Activated CD4-positive, alpha-beta T cell treated with anti-CD3 and anti-CD28 coated beads for 36 hours (primary cell): ENCODE measurements at regions of chr1 and their contacts with region 1.

Region 1: DNA sequence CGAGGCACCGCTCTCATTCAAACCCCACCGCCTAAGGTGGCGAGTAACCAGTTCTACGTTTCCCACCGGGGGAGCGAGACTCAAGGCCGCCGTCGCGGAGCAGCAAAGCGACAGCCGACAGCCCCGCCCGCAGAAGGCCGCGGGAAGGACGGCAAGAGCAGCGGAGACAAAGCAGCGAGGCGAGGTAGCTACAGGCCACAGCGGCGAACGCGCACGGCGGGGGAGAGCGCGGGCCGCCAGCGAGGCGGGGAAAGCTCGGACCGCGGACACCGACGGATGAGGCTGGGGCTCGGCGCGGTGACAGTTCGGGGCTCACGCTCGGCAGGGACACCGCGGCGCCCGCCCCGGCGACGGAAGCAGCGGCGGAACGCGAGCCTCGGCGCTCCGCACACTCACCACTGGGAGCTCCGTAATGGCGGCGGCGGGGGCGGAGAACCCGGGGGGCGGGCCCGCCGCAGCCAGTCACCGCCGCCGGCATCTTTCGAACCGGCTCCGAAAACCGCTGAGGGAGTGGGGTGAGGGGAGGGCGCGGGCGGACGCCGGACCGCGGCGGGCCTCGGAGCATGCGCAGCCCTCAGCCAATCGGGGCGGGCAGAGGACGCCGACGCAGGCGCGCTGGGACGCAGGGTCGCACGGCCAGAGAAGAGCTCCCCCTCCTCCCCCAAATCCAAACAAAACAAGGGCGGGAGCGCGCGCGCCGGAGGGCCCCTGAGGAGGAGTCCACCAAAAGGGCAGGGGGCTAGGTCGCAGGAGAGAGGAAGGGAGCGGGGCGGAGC is 666 bp downstream of the HP1BP3 start:
- DNase-seq: peak; percentile 98
- ATAC-seq: peak; percentile 88
- H3K4me3 Mint-ChIP-seq: peak overlapping the region; percentile 96
- H3K27ac Mint-ChIP-seq: peak overlapping the region; percentile 96
- H3K4me1 Mint-ChIP-seq: peaks cover 29% of the 10 kb centered on the region
- H3K27me3 Mint-ChIP-seq: no peaks in the 10 kb centered on the region

Region 2: DNA sequence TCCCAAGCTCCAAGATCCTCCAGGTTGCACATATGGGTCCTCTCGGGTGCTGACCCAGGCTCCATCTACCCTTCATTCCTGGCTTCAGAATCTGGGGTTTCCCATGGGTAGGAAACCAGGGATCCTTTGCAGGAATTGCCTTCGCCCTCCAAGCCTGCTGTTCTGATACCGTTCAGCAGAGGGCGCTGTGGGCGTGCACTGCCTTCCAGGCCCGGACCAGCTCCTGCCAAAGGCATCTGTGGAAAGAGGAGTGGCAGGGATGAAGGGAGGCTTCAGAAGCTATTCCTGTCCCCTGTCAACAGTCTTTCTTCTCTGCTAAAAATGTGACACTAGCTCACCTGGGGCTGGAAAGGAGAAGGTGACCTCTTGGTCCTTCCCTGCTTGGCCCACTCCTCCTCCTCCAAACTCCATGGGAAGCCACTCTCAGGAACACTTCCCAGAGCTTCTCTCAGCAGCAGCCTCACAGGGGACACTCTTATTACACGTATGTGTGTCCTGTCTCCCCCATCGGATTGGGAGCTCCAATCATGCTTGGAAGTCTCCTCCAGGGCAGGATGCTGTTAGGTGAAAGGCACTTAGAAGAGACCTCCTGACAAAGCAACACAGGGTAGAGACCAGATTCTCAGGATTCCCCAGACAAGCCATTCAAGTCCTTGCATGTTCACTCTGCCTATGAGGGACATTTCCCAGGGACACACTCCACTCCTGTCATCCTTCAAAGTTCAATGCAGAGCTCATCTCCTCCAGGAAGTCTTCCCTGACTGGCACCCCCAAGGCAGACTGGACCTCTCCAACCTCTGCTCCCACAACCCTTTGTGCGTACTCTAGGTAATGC is 424.4 kb before region 1 on chr1:
- CTCF ChIA-PET with region 1: no interaction called
- POLR2A ChIA-PET with region 1: no interaction called
- intact Hi-C with region 1: no loop called
- DNase-seq: peak; percentile 63
- ATAC-seq: no peak
- H3K4me3 Mint-ChIP-seq: no peak overlapping the region
- H3K27ac Mint-ChIP-seq: no peak overlapping the region
- H3K4me1 Mint-ChIP-seq: peaks cover 20% of the 10 kb centered on the region
- H3K27me3 Mint-ChIP-seq: peaks cover 72% of the 10 kb centered on the region

Region 3: GRCh38 chr1:20466273-20466672 is 320.2 kb before region 1 on chr1:
- CTCF ChIA-PET with region 1: no interaction called
- POLR2A ChIA-PET with region 1: no interaction called
- intact Hi-C with region 1: no loop called
- DNase-seq: peak; percentile 69
- ATAC-seq: peak; percentile 78
- H3K4me3 Mint-ChIP-seq: no peak overlapping the region
- H3K27ac Mint-ChIP-seq: no peak overlapping the region
- H3K4me1 Mint-ChIP-seq: peaks cover 6% of the 10 kb centered on the region
- H3K27me3 Mint-ChIP-seq: peaks cover 26% of the 10 kb centered on the region

Region 4: GRCh38 chr1:20633190-20634064 is 153.0 kb before region 1 on chr1 and contains the start of gene PINK1:
- CTCF ChIA-PET with region 1: no interaction called
- POLR2A ChIA-PET with region 1: interaction called, 6 read pairs
- intact Hi-C with region 1: loop called in 1 of 2 experiments (anchors 1 kb)
- DNase-seq: peak; percentile 91
- ATAC-seq: peak; percentile 82
- H3K4me3 Mint-ChIP-seq: peak within 1 kb of the TSS; percentile 72
- H3K27ac Mint-ChIP-seq: peak within 1 kb of the TSS; percentile 72
- H3K4me1 Mint-ChIP-seq: peaks cover 9% of the 10 kb centered on the region
- H3K27me3 Mint-ChIP-seq: no peaks in the 10 kb centered on the region
- total RNA-seq, gene PINK1: 2.5 to 3.2 TPM

Region 5: GRCh38 chr1:20717452-20718342 is 68.7 kb before region 1 on chr1 and contains the start of gene KIF17:
- CTCF ChIA-PET with region 1: no interaction called
- POLR2A ChIA-PET with region 1: interaction called, 5 read pairs
- intact Hi-C with region 1: loop called in 1 of 2 experiments (anchors 2 kb)
- DNase-seq: peak; percentile 77
- ATAC-seq: peak; percentile 78
- H3K4me3 Mint-ChIP-seq: peak within 1 kb of the TSS; percentile 36
- H3K27ac Mint-ChIP-seq: no peak within 1 kb of the TSS
- H3K4me1 Mint-ChIP-seq: peaks cover 8% of the 10 kb centered on the region
- H3K27me3 Mint-ChIP-seq: peaks cover 24% of the 10 kb centered on the region
- total RNA-seq, gene KIF17: 0.25 TPM in 1 of 2 experiments, not detected in the other

Region 6: GRCh38 chr1:20896871-20897223 is 110.4 kb after region 1 on chr1:
- CTCF ChIA-PET with region 1: no interaction called
- POLR2A ChIA-PET with region 1: no interaction called
- intact Hi-C with region 1: no loop called
- DNase-seq: no peak
- ATAC-seq: no peak
- H3K4me3 Mint-ChIP-seq: no peak overlapping the region
- H3K27ac Mint-ChIP-seq: no peak overlapping the region
- H3K4me1 Mint-ChIP-seq: no peaks in the 10 kb centered on the region
- H3K27me3 Mint-ChIP-seq: no peaks in the 10 kb centered on the region

Region 7: GRCh38 chr1:21124846-21125245 is 338.4 kb after region 1 on chr1:
- CTCF ChIA-PET with region 1: no interaction called
- POLR2A ChIA-PET with region 1: no interaction called
- intact Hi-C with region 1: no loop called
- DNase-seq: no peak
- ATAC-seq: no peak
- H3K4me3 Mint-ChIP-seq: no peak overlapping the region
- H3K27ac Mint-ChIP-seq: no peak overlapping the region
- H3K4me1 Mint-ChIP-seq: no peaks in the 10 kb centered on the region
- H3K27me3 Mint-ChIP-seq: no peaks in the 10 kb centered on the region

Region 8: GRCh38 chr1:21176586-21177555 is 390.4 kb after region 1 on chr1 and contains the start of gene EIF4G3:
- CTCF ChIA-PET with region 1: no interaction called
- POLR2A ChIA-PET with region 1: interaction called, 3 read pairs
- intact Hi-C with region 1: loop called (anchors 1 to 10 kb)
- DNase-seq: peak; percentile 100
- ATAC-seq: peak; percentile 99
- H3K4me3 Mint-ChIP-seq: peak within 1 kb of the TSS; percentile 81
- H3K27ac Mint-ChIP-seq: peak within 1 kb of the TSS; percentile 92
- H3K4me1 Mint-ChIP-seq: peaks cover 25% of the 10 kb centered on the region
- H3K27me3 Mint-ChIP-seq: no peaks in the 10 kb centered on the region
- total RNA-seq, gene EIF4G3: 47.0 to 55.0 TPM

Region 9: DNA sequence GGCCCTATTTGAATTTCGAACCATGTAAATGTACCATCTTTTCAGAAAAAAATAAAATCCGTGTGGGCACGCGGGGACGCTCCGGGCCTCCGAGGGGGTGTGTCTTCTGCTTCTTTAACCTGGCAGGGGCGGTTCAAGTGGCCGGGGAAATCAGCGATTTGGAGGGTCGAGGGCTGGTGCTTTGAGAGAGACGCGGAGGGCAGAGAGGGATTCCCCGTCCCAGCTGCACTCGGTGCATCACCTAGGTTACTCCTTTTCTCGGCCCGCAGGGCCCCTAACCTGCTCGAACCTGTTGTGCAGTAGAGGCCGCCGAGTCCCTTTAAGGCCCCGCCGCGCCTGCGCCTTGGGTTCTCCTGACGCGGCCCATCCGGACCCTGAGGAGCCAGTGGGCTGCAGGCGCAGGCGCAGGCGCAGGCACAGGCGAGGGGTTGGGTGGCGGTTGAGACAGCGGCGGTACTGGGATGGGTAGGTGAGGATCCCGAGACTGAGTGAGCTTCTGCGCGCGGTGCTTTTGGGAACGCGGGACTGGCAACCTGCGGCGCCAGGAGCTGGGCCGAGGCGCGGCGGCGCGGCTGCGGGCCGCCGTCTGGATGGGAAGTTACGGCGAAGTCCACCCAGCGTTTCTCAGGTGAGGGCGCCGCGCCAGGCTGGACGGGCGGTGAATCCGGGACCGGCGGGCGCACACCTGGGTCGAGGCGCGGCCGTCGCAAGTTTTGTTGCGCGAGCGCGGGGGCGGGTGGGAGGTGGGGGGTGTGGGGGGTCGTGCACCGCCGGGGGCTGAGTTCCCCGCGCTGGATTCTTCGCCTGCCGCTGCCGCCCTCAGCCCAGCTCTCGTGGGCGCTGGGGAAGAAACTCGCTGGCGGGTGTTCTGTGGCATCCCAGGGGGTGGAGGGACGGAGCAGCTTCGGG is 653.5 kb after region 1 on chr1 and contains the start of gene NBPF3:
- CTCF ChIA-PET with region 1: no interaction called
- POLR2A ChIA-PET with region 1: no interaction called
- intact Hi-C with region 1: loop called in 1 of 2 experiments (anchors 2 kb)
- DNase-seq: peak; percentile 96
- ATAC-seq: peak; percentile 98
- H3K4me3 Mint-ChIP-seq: peak within 1 kb of the TSS; percentile 91
- H3K27ac Mint-ChIP-seq: peak within 1 kb of the TSS; percentile 93
- H3K4me1 Mint-ChIP-seq: peaks cover 17% of the 10 kb centered on the region
- H3K27me3 Mint-ChIP-seq: peaks cover 3% of the 10 kb centered on the region
- total RNA-seq, gene NBPF3: 8.5 to 9.9 TPM

Region 10: GRCh38 chr1:22025368-22026155 is 1239.1 kb after region 1 on chr1:
- CTCF ChIA-PET with region 1: no interaction called
- POLR2A ChIA-PET with region 1: no interaction called
- intact Hi-C with region 1: loop called in 1 of 2 experiments (anchors 5 kb)
- DNase-seq: peak; percentile 94
- ATAC-seq: peak; percentile 74
- H3K4me3 Mint-ChIP-seq: peak overlapping the region; percentile 82
- H3K27ac Mint-ChIP-seq: peak overlapping the region; percentile 99
- H3K4me1 Mint-ChIP-seq: peaks cover 59% of the 10 kb centered on the region
- H3K27me3 Mint-ChIP-seq: no peaks in the 10 kb centered on the region